ENCODE measurements at regions of chr3 and their contacts with region 1.

Region 1: GRCh38 chr3:185937689-185938463 is at the start of gene TRA2B:
- DNase-seq: peak; percentile 98
- H3K4me3 Mint-ChIP-seq: peak within 1 kb of the TSS; percentile 97
- H3K27ac Mint-ChIP-seq: peak within 1 kb of the TSS; percentile 99
- H3K4me1 Mint-ChIP-seq: peaks cover 40% of the 10 kb centered on the region
- H3K27me3 Mint-ChIP-seq: peaks cover 8% of the 10 kb centered on the region
- total RNA-seq, gene TRA2B: 279 and 312 TPM in 2 replicates

Region 2: DNA sequence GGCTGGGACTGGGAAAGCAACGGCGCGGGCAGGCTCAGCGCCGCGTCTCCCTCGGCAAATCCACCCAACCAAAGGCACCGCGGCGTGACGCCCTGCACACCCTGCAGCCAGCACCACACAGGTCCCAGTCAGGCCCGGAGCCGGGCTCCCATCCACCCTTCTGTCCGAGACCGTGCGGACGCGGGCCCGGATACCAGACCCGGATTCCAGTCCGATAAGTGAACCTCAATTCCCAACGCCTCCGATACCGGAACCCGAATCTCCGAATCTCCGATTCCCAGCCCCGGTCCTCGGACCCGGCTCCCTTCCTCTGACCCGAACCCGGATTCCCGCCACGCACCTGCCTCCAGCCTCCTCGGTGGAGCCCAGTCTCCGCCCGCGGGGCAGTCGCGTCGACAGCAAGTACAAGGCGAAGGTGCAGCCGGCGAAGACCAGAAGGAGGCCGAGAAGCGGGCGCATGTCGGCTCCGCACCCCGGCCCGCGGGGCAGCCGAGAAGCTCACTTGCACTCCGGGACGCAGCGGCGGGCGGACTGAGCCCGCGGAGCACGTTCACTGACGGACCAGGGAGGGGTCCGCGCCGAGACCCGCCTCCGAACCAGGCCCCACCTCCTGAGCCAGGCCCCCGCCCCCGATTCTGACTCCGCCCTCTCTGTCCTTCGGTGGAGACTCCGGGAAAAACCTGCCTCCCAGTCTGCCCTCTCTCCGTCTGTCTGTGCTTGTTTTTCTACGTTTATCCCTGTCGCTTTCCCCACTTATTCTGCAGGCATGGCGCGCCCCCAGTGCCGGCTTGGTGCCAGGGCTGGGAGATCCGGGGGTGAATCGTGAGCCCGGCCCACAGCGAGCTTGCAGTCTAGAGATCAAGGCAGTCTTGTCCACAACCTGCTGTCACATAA is 439.1 kb before region 1 on chr3 and contains the start of gene TMEM41A:
- intact Hi-C with region 1: loop called (anchors 5 kb)
- DNase-seq: peak; percentile 87
- H3K4me3 Mint-ChIP-seq: peak within 1 kb of the TSS; percentile 97
- H3K27ac Mint-ChIP-seq: peak within 1 kb of the TSS; percentile 90
- H3K4me1 Mint-ChIP-seq: peaks cover 21% of the 10 kb centered on the region
- H3K27me3 Mint-ChIP-seq: peaks cover 10% of the 10 kb centered on the region
- total RNA-seq, gene TMEM41A: 24.6 and 26.6 TPM in 2 replicates

Region 3: DNA sequence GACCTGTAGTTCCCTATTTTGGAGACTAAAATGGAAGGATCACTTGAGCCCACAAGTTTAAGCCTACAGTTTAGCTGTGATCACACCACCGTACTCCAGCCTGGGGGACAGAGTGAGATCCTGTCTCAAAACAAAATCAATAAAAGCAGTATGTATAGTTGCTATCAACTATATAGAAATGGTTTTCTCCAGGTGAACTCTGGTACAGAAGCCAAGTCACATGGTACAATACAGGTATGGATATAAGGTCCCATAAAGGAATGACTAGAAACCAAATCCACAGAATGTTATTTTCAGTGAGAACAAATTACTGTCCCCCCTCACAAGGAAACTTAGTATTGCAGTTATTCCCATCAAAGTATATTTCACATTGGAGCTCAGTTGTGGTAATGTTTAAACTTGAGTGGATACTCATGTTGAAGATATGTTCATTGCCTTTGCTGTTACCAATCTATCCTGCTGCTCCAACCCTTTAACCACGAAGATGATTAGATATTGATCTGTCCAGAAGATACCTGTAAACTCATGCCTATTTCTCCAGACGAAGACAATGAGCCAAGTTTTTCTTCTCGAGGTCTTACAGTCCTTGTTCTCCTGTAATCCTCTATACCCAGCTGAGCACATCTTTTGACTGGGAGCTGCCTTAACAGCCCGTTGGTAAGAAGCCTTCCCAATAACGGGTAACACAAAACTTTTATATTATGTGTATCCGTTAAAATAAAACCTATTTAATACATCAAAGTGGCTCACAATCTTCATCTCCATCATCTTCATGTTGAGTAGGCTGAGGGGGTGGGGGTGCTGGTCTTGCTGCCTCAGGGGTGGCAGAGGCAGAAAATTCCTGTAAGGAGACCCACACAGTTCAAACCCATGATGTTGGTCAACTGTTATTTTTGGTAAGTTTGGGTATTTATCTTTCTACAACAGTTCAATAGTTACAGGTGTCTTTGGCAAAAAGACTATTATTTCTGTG is 24.7 kb before region 1 on chr3:
- intact Hi-C with region 1: loop called (anchors 2 kb)
- DNase-seq: no peak
- H3K4me3 Mint-ChIP-seq: no peak overlapping the region
- H3K27ac Mint-ChIP-seq: no peak overlapping the region
- H3K4me1 Mint-ChIP-seq: peaks cover 6% of the 10 kb centered on the region
- H3K27me3 Mint-ChIP-seq: no peaks in the 10 kb centered on the region

Region 4: GRCh38 chr3:185950718-185951117 is 12.8 kb after region 1 on chr3:
- intact Hi-C with region 1: no loop called
- DNase-seq: no peak
- H3K4me3 Mint-ChIP-seq: no peak overlapping the region
- H3K27ac Mint-ChIP-seq: no peak overlapping the region
- H3K4me1 Mint-ChIP-seq: no peaks in the 10 kb centered on the region
- H3K27me3 Mint-ChIP-seq: peaks cover 32% of the 10 kb centered on the region

Region 5: GRCh38 chr3:185976977-185977678 is 39.3 kb after region 1 on chr3:
- intact Hi-C with region 1: loop called (anchors 1 kb)
- DNase-seq: peak; percentile 71
- H3K4me3 Mint-ChIP-seq: peak overlapping the region; percentile 11
- H3K27ac Mint-ChIP-seq: peak overlapping the region; percentile 82
- H3K4me1 Mint-ChIP-seq: peaks cover 18% of the 10 kb centered on the region
- H3K27me3 Mint-ChIP-seq: peaks cover 37% of the 10 kb centered on the region

Region 6: GRCh38 chr3:186783073-186783730 is 845.3 kb after region 1 on chr3 and contains the start of gene EIF4A2:
- intact Hi-C with region 1: loop called (anchors 1 kb)
- DNase-seq: peak; percentile 89
- H3K4me3 Mint-ChIP-seq: peak within 1 kb of the TSS; percentile 95
- H3K27ac Mint-ChIP-seq: peak within 1 kb of the TSS; percentile 94
- H3K4me1 Mint-ChIP-seq: peaks cover 41% of the 10 kb centered on the region
- H3K27me3 Mint-ChIP-seq: no peaks in the 10 kb centered on the region
- total RNA-seq, gene EIF4A2: 491 and 514 TPM in 2 replicates

Region 7: GRCh38 chr3:186806089-186807055 is 868.5 kb after region 1 on chr3 and contains the start of gene RFC4:
- intact Hi-C with region 1: loop called (anchors 5 kb)
- DNase-seq: peak; percentile 80
- H3K4me3 Mint-ChIP-seq: peak within 1 kb of the TSS; percentile 93
- H3K27ac Mint-ChIP-seq: peak within 1 kb of the TSS; percentile 85
- H3K4me1 Mint-ChIP-seq: peaks cover 31% of the 10 kb centered on the region
- H3K27me3 Mint-ChIP-seq: no peaks in the 10 kb centered on the region
- total RNA-seq, gene RFC4: 111 and 122 TPM in 2 replicates

Region 8: GRCh38 chr3:187139126-187139894 is 1201.4 kb after region 1 on chr3 and contains the start of gene RPL39L:
- intact Hi-C with region 1: loop called (anchors 10 kb)
- DNase-seq: peak; percentile 91
- H3K4me3 Mint-ChIP-seq: peak within 1 kb of the TSS; percentile 92
- H3K27ac Mint-ChIP-seq: peak within 1 kb of the TSS; percentile 96
- H3K4me1 Mint-ChIP-seq: peaks cover 34% of the 10 kb centered on the region
- H3K27me3 Mint-ChIP-seq: peaks cover 3% of the 10 kb centered on the region
- total RNA-seq, gene RPL39L: 7.5 and 8.3 TPM in 2 replicates